Activated B cell treated with CpG ODN at 0.5 μM for 24 hours (primary cell): ENCODE measurements at regions of chr6 and their contacts with region 1.

Region 1: DNA sequence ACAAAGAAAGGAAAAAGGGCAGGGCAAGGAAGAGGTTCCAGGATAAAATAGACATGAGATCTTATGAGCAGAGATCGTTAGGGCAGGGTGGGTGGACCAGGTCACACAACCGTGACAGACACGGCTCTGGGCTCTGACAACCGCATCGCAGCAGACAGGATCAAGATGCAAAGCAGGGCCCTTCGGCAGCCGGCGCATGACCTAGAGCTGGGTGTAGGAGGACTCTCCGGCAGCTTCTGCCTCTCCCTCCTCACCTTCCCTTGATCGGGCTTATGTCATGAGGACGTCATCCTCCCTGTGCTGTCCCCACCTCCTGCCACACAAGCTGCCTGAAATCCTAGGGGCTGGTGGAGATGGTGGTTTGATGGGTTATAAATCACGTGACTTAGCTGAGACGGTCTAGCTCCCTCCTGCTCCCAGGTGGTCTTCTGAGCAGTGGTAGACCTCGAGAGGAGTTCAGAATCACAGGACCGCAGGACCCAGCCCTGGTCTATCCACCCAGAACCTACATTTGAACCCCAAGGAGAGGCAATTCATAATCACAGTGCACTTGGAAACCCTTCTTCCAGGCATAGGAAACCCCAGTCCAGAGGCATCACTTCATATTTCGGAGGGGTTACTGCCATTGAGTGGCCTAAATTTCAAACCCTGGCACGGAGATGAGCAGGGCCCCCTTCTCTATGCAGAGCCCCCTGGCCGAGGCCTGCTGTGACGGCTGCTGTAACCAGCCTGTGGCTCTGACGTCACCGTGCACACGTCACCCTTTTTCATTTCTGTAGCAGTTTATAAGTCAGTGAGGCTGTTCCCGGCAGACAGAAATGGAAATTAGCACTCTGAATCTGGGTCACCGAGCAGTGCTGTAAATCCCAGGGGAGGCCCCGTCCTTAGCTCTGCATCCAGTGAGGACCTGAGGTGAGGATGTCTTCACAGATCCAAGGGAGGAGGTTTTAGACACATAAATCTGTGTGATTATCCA is 8.7 kb upstream of the CCR6 start:
- DNase-seq: peak; percentile 75
- ATAC-seq: peak; percentile 78
- H3K4me3 Mint-ChIP-seq: peak overlapping the region; percentile 84
- H3K27ac Mint-ChIP-seq: peak overlapping the region; percentile 94
- H3K4me1 Mint-ChIP-seq: peaks cover 96% of the 10 kb centered on the region
- H3K27me3 Mint-ChIP-seq: no peaks in the 10 kb centered on the region
- CTCF ChIP-seq: no peak

Region 2: GRCh38 chr6:166382933-166383801 is 731.1 kb before region 1 on chr6 and contains the start of gene MPC1:
- CTCF ChIA-PET with region 1: no interaction called
- POLR2A ChIA-PET with region 1: no interaction called
- intact Hi-C with region 1: loop called (anchors 5 kb)
- DNase-seq: peak; percentile 96
- ATAC-seq: peak; percentile 94
- H3K4me3 Mint-ChIP-seq: peak within 1 kb of the TSS; percentile 92
- H3K27ac Mint-ChIP-seq: peak within 1 kb of the TSS; percentile 76
- H3K4me1 Mint-ChIP-seq: peaks cover 15% of the 10 kb centered on the region
- H3K27me3 Mint-ChIP-seq: no peaks in the 10 kb centered on the region
- CTCF ChIP-seq: no peak
- total RNA-seq, gene MPC1: 16.7 and 17.3 TPM in 2 replicates

Region 3: GRCh38 chr6:167047554-167047953 is 66.7 kb before region 1 on chr6:
- CTCF ChIA-PET with region 1: interaction called, 8 read pairs
- POLR2A ChIA-PET with region 1: interaction called, 16 read pairs
- intact Hi-C with region 1: loop called (anchors 1 kb)
- DNase-seq: peak; percentile 36
- ATAC-seq: peak; percentile 85
- H3K4me3 Mint-ChIP-seq: peak overlapping the region; percentile 76
- H3K27ac Mint-ChIP-seq: peak overlapping the region; percentile 96
- H3K4me1 Mint-ChIP-seq: peaks cover 68% of the 10 kb centered on the region
- H3K27me3 Mint-ChIP-seq: no peaks in the 10 kb centered on the region
- CTCF ChIP-seq: no peak

Region 4: GRCh38 chr6:167079853-167080297 is 34.3 kb before region 1 on chr6:
- CTCF ChIA-PET with region 1: no interaction called
- POLR2A ChIA-PET with region 1: interaction called, 22 read pairs
- intact Hi-C with region 1: loop called (anchors 1 kb)
- DNase-seq: peak; percentile 65
- ATAC-seq: peak; percentile 99
- H3K4me3 Mint-ChIP-seq: peak overlapping the region; percentile 54
- H3K27ac Mint-ChIP-seq: peak overlapping the region; percentile 91
- H3K4me1 Mint-ChIP-seq: peaks cover 52% of the 10 kb centered on the region
- H3K27me3 Mint-ChIP-seq: no peaks in the 10 kb centered on the region
- CTCF ChIP-seq: peak; percentile 51

Region 5: GRCh38 chr6:167130008-167130677 is 15.9 kb after region 1 on chr6:
- CTCF ChIA-PET with region 1: interaction called, 14 read pairs
- POLR2A ChIA-PET with region 1: interaction called, 688 read pairs
- intact Hi-C with region 1: loop called (anchors 1 kb)
- DNase-seq: no peak
- ATAC-seq: peak; percentile 18
- H3K4me3 Mint-ChIP-seq: peak overlapping the region; percentile 55
- H3K27ac Mint-ChIP-seq: peak overlapping the region; percentile 95
- H3K4me1 Mint-ChIP-seq: peaks cover 91% of the 10 kb centered on the region
- H3K27me3 Mint-ChIP-seq: no peaks in the 10 kb centered on the region
- CTCF ChIP-seq: no peak